Naive thymus-derived CD4-positive, alpha-beta T cell (primary cell): ENCODE measurements at regions of chr12 and their contacts with region 1.

Region 1: DNA sequence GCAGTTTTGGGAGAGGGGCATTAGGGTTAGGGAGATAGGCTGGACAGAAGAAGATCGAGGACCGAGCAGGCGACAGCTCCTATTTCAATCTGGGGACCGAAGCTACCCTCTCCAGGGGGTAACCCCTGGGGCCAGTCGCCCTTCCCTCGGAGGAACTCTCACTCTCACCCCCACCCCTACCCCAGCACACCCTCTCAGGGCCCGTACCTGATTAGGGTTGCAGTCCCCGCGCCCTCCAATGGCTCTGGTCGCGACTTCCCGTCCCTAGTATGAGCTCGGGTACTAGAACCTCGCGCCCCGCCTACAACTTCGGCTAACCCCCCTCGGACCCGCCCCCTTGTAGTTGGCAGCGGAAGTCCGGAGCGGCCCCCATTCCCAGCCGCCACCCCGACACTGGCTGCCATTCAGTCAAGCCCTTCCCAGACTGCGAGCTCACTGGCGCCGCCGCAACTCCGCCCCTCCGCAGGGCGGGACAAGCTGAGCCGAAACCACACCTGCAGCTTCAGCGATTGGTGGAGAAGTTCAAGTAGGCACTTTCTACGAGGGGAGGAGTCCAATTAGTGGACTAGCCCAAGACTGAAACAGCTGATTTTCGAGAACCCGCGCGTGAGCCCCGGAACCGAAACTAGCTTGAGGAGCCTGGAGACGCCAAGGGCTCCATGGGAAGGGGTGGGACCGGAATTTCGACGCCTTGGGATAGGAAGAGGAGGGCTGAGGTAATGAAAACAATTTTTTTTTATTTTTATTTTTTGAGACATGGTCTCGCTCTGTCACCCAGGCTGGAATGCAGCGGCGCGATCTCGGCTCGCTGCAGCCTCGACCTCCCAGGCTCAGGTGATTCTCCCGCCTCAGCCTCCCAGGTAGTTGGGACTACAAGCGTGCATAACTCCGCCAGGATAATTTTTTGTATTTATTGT is at the start of gene STAT2:
- DNase-seq: peak; percentile 94 to 100 (median 99)
- ATAC-seq: peak; percentile 97
- H3K4me3 ChIP-seq: peak within 1 kb of the TSS; percentile 89
- H3K4me3 Mint-ChIP-seq: peak within 1 kb of the TSS; percentile 83 to 99 (median 96)
- H3K27ac ChIP-seq: peak within 1 kb of the TSS; percentile 79
- H3K27ac Mint-ChIP-seq: peak within 1 kb of the TSS; percentile 90 to 98 (median 96)
- H3K4me1 ChIP-seq: peaks cover 16 to 17% of the 10 kb centered on the region in 2 donors
- H3K4me1 Mint-ChIP-seq: peaks cover 14 to 40% (median 27%) of the 10 kb centered on the region in 7 donors
- H3K27me3 ChIP-seq: no peaks in the 10 kb centered on the region
- H3K27me3 Mint-ChIP-seq: no peaks in the 10 kb centered on the region
- total RNA-seq, gene STAT2: 119 to 291 (median 182) TPM

Region 2: GRCh38 chr12:56104109-56104814 is 255.8 kb before region 1 on chr12 and contains the start of gene PA2G4:
- CTCF ChIA-PET with region 1: no interaction called
- POLR2A ChIA-PET with region 1: interaction called, 10 read pairs
- intact Hi-C with region 1: no loop called
- DNase-seq: peak; percentile 83 to 97 (median 96)
- ATAC-seq: peak; percentile 93
- H3K4me3 ChIP-seq: peak within 1 kb of the TSS; percentile 87
- H3K4me3 Mint-ChIP-seq: peak within 1 kb of the TSS; percentile 91 to 100 (median 98)
- H3K27ac ChIP-seq: peak within 1 kb of the TSS; percentile 82
- H3K27ac Mint-ChIP-seq: peak within 1 kb of the TSS; percentile 92 to 99 (median 98)
- H3K4me1 ChIP-seq: peaks cover 36 to 37% of the 10 kb centered on the region in 2 donors
- H3K4me1 Mint-ChIP-seq: peaks cover 31 to 69% (median 64%) of the 10 kb centered on the region in 7 donors
- H3K27me3 ChIP-seq: no peaks in the 10 kb centered on the region
- H3K27me3 Mint-ChIP-seq: peaks cover 0 to under 1% (median 0%) of the 10 kb centered on the region in 5 donors
- total RNA-seq, gene PA2G4: 61.7 to 254 (median 109) TPM

Region 3: DNA sequence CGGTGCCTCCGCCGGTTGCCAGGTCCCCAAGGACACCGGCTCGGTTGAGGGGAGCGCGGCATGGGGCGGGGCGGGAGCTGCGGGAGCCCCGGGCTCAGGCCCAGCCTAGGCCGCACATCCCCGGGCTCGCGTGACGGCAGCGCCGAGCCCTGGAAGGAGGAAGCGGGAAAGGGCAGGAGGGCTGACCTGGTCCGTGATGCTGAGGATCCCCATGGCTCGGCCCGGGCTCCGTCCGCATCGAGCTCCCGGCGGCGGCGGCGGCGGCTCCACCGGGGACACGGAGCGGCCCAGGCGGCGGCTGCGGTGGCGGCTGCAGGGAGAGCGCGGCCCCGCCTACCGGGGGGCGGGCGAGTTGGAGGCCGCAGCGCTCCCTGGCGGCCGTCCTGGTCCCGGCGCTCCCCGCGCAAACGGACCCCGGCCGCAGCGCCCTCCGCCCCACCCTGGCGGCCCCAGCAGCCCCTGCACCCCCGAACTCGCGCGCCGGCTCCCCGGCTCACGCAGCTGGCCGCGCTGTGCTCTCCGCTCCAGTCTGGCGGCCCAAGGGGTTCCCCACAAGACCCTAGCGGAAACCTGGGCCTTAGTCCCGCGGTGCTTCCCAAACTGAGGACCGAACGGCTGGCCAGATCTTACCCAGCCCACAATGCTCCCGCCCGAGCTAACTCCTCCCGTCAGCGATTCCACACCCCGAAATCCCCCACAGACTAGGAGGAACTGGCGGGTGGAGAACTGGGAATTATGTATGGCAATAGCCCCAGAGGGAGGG is 101.9 kb before region 1 on chr12 and contains the start of gene ANKRD52:
- CTCF ChIA-PET with region 1: no interaction called
- POLR2A ChIA-PET with region 1: interaction called, 3 read pairs
- intact Hi-C with region 1: loop called in 1 of 2 experiments (anchors 2 kb)
- DNase-seq: peak; percentile 69 to 92 (median 84)
- ATAC-seq: peak; percentile 99
- H3K4me3 ChIP-seq: peak within 1 kb of the TSS; percentile 99
- H3K4me3 Mint-ChIP-seq: peak within 1 kb of the TSS; percentile 87 to 97 (median 93)
- H3K27ac ChIP-seq: peak within 1 kb of the TSS; percentile 90
- H3K27ac Mint-ChIP-seq: peak within 1 kb of the TSS; percentile 83 to 94 (median 90)
- H3K4me1 ChIP-seq: peaks cover 18 to 19% of the 10 kb centered on the region in 2 donors
- H3K4me1 Mint-ChIP-seq: peaks cover 13 to 27% (median 22%) of the 10 kb centered on the region in 7 donors
- H3K27me3 ChIP-seq: no peaks in the 10 kb centered on the region
- H3K27me3 Mint-ChIP-seq: peaks cover 0 to 2% (median 0%) of the 10 kb centered on the region in 5 donors
- total RNA-seq, gene ANKRD52: 26.9 to 64.4 (median 40.7) TPM

Region 4: GRCh38 chr12:56333679-56334489 is 26.2 kb before region 1 on chr12 and contains the start of gene PAN2:
- CTCF ChIA-PET with region 1: interaction called, 10 read pairs
- POLR2A ChIA-PET with region 1: interaction called, 156 read pairs
- intact Hi-C with region 1: loop called (anchors 1 kb)
- DNase-seq: peak; percentile 74 to 94 (median 92)
- ATAC-seq: peak; percentile 90
- H3K4me3 ChIP-seq: peak within 1 kb of the TSS; percentile 93
- H3K4me3 Mint-ChIP-seq: peak within 1 kb of the TSS; percentile 89 to 99 (median 95)
- H3K27ac ChIP-seq: peak within 1 kb of the TSS; percentile 98
- H3K27ac Mint-ChIP-seq: peak within 1 kb of the TSS; percentile 97 to 100 (median 99)
- H3K4me1 ChIP-seq: peaks cover 27 to 30% of the 10 kb centered on the region in 2 donors
- H3K4me1 Mint-ChIP-seq: peaks cover 16 to 66% (median 48%) of the 10 kb centered on the region in 7 donors
- H3K27me3 ChIP-seq: no peaks in the 10 kb centered on the region
- H3K27me3 Mint-ChIP-seq: peaks cover 0 to 2% (median 0%) of the 10 kb centered on the region in 5 donors
- total RNA-seq, gene PAN2: 65.8 to 279 (median 144) TPM

Region 5: GRCh38 chr12:56461235-56462159 is 101.4 kb after region 1 on chr12:
- CTCF ChIA-PET with region 1: interaction called, 17 read pairs
- POLR2A ChIA-PET with region 1: interaction called, 11 read pairs
- intact Hi-C with region 1: loop called (anchors 1 kb)
- DNase-seq: no peak
- ATAC-seq: no peak
- H3K4me3 ChIP-seq: no peak overlapping the region
- H3K4me3 Mint-ChIP-seq: no peak overlapping the region
- H3K27ac ChIP-seq: no peak overlapping the region
- H3K27ac Mint-ChIP-seq: no peak overlapping the region
- H3K4me1 ChIP-seq: peaks cover 0 to 6% of the 10 kb centered on the region in 2 donors
- H3K4me1 Mint-ChIP-seq: peaks cover 0 to 10% (median 5%) of the 10 kb centered on the region in 7 donors
- H3K27me3 ChIP-seq: no peaks in the 10 kb centered on the region
- H3K27me3 Mint-ChIP-seq: no peaks in the 10 kb centered on the region